B cell (primary cell): ENCODE measurements at regions of chr20 and their contacts with region 1.

Region 1: DNA sequence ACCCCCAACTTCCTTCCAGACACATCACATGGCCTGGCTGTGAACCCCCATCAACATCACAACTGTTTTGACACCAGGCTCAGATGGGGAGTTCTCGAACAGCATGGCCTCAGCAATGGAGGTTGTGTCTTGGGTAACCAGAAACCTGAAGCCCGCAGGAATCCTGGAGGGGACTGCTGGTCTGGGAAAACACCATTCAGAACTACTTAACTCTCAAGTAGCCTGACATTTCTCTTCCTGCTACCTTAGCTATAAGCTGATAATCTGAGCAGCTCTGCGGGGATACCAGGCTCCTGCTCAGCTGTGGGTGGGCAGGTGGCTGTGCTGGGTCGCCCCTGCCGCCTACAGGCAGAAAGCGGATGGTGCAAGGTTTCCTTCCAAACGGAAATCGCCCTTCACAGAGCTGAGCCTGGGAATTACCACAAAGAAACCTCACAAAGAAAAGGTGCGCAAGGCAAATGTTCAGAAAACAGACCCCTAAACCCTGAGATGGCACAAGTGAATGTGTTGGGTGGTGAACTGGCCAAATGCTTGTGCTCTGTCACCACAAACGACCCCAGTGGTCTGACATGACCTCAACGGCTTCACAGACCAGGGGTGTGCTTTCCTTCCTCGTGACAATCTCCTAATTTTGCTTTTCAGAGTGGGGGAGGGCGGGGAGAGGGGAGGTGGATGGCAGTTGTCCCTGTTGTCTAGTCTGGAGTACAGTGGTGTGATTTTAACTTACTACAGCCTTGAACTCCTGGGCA is 29.5 kb downstream of the SNX5 start:
- DNase-seq: peak; percentile 79
- ATAC-seq: peak; percentile 89
- H3K4me3 ChIP-seq: no peak overlapping the region
- H3K4me3 Mint-ChIP-seq: peak overlapping the region; percentile 54
- H3K27ac ChIP-seq: peak overlapping the region in 1 of 2 donors; percentile 55
- H3K27ac Mint-ChIP-seq: peak overlapping the region; percentile 56
- H3K4me1 ChIP-seq: peaks cover 24 to 26% of the 10 kb centered on the region in 2 donors
- H3K4me1 Mint-ChIP-seq: peaks cover 36% of the 10 kb centered on the region
- H3K27me3 ChIP-seq: no peaks in the 10 kb centered on the region
- H3K27me3 Mint-ChIP-seq: no peaks in the 10 kb centered on the region
- CTCF ChIP-seq: peak; percentile 88

Region 2: DNA sequence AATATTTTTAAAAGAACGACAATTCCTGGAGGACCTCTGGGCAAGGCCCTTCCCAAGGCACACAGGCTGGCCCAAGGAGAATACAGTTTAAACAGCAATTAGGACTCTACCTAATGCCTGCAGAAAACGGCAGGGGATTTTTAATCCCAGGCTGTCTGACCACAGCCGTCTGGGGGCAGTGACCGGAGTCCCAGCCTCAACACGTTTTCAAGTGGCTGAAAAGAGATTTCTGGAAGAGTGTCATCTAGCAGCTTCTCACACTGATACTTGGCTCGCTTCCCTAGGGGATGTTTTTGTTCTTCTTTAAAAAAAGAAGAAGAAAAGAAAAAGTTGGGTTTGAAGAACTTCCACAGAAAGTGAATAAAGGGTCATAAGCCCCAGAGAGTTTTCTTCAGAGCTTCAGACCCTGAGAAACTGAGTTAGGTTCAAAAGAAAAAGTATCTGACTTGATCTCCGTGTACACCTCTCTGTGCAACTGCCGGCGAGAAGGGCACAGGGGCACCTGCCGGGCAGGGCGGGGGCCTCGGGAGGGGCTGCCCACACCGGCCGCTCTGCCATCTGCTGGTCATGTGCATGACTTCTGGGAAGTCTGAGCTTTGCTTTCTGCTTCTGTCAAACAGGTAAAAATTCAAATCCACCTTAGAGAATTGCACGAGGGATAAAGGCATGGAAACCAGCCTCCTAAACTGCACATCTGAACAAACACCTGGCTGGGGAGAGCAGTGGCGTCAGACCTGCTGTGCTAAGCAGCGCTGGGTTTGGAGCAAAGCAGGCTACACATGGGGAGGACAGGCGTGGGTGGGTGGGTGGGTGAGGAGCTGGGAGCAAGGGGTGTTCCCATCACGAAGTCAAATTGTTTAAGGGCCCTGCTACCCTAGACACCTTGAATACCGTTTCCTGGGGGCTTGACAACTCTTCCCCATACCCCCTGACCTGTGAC is 290.0 kb before region 1 on chr20:
- CTCF ChIA-PET with region 1: interaction called, 11 read pairs
- POLR2A ChIA-PET with region 1: no interaction called
- intact Hi-C with region 1: no loop called
- DNase-seq: peak; percentile 61
- ATAC-seq: peak; percentile 81
- H3K4me3 ChIP-seq: peak overlapping the region in 1 of 5 experiments; percentile 6
- H3K4me3 Mint-ChIP-seq: peak overlapping the region; percentile 4
- H3K27ac ChIP-seq: no peak overlapping the region
- H3K27ac Mint-ChIP-seq: no peak overlapping the region
- H3K4me1 ChIP-seq: peaks cover 8 to 18% of the 10 kb centered on the region in 2 donors
- H3K4me1 Mint-ChIP-seq: peaks cover 22% of the 10 kb centered on the region
- H3K27me3 ChIP-seq: no peaks in the 10 kb centered on the region
- H3K27me3 Mint-ChIP-seq: no peaks in the 10 kb centered on the region
- CTCF ChIP-seq: peak; percentile 46

Region 3: GRCh38 chr20:17825960-17826843 is 112.8 kb before region 1 on chr20:
- CTCF ChIA-PET with region 1: no interaction called
- POLR2A ChIA-PET with region 1: no interaction called
- intact Hi-C with region 1: no loop called
- DNase-seq: no peak
- ATAC-seq: no peak
- H3K4me3 ChIP-seq: no peak overlapping the region
- H3K4me3 Mint-ChIP-seq: no peak overlapping the region
- H3K27ac ChIP-seq: no peak overlapping the region
- H3K27ac Mint-ChIP-seq: no peak overlapping the region
- H3K4me1 ChIP-seq: no peaks in the 10 kb centered on the region
- H3K4me1 Mint-ChIP-seq: peaks cover 4% of the 10 kb centered on the region
- H3K27me3 ChIP-seq: no peaks in the 10 kb centered on the region
- H3K27me3 Mint-ChIP-seq: no peaks in the 10 kb centered on the region
- CTCF ChIP-seq: no peak

Region 4: GRCh38 chr20:17958373-17959256 is 19.6 kb after region 1 on chr20:
- CTCF ChIA-PET with region 1: interaction called, 16 read pairs
- POLR2A ChIA-PET with region 1: no interaction called
- intact Hi-C with region 1: no loop called
- DNase-seq: no peak
- ATAC-seq: no peak
- H3K4me3 ChIP-seq: peak overlapping the region in 1 of 5 experiments; percentile 22
- H3K4me3 Mint-ChIP-seq: peak overlapping the region; percentile 77
- H3K27ac ChIP-seq: peak overlapping the region; percentile 4 to 77
- H3K27ac Mint-ChIP-seq: peak overlapping the region; percentile 86
- H3K4me1 ChIP-seq: peaks cover 88 to 96% of the 10 kb centered on the region in 2 donors
- H3K4me1 Mint-ChIP-seq: peaks cover 91% of the 10 kb centered on the region
- H3K27me3 ChIP-seq: no peaks in the 10 kb centered on the region
- H3K27me3 Mint-ChIP-seq: no peaks in the 10 kb centered on the region
- CTCF ChIP-seq: no peak